ENCODE measurements at regions of chr7 and their contacts with region 1.

Region 1: GRCh38 chr7:1193593-1194424 is 33.8 kb upstream of the ZFAND2A start:
- DNase-seq: peak in 2 of 3 donors; percentile 58 to 61
- H3K4me3 ChIP-seq: no peak overlapping the region
- H3K27ac ChIP-seq: no peak overlapping the region
- H3K4me1 ChIP-seq: peaks cover 2 to 23% (median 12%) of the 10 kb centered on the region in 4 experiments
- H3K27me3 ChIP-seq: peaks cover 0 to 19% (median 2%) of the 10 kb centered on the region in 5 experiments

Region 2: DNA sequence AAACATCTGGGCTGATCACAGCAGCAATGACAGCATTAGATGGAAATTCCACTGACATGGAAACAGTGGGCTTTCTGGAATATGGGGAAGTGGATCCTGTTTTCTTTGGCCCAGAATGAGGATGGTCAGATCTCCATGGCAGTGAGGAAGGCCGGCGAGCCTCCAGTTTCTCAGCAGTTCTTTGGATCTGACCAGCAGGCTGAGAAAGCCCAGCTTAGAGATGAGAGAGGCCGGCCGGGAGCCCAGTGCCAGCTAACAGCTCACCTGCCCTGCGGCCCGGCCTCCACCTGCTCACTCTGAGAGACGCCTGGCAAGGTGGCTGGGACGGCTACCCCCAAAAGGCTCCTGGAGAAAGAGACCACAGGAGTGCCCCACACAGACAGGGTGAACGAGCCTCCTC is 81.7 kb before region 1 on chr7:
- CTCF ChIA-PET with region 1: no interaction called
- POLR2A ChIA-PET with region 1: no interaction called
- DNase-seq: no peak
- H3K4me3 ChIP-seq: no peak overlapping the region
- H3K27ac ChIP-seq: no peak overlapping the region
- H3K4me1 ChIP-seq: no peaks in the 10 kb centered on the region
- H3K27me3 ChIP-seq: no peaks in the 10 kb centered on the region

Region 3: DNA sequence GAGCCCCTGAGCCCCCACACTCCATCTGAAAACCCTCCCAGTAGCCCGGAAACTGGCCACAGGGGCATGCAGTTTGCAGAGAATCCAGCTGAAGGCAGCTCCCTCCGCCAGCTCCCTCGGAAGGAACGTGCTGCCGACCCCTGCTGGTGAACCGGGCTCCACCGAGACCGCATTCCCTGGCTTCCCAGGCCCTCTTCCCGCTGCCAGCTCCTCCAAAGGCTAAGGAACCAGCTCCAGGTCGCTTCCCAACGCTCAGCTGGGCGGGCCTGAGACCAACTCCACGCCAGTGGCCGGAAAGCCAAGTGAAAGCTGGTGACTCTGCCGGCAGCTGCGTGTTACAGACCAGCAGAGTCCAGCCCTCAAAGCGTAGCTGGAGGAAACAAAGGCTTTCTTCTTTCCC is 70.1 kb before region 1 on chr7:
- CTCF ChIA-PET with region 1: no interaction called
- POLR2A ChIA-PET with region 1: no interaction called
- DNase-seq: no peak
- H3K4me3 ChIP-seq: no peak overlapping the region
- H3K27ac ChIP-seq: no peak overlapping the region
- H3K4me1 ChIP-seq: peaks cover 0 to 4% (median 0%) of the 10 kb centered on the region in 4 experiments
- H3K27me3 ChIP-seq: no peaks in the 10 kb centered on the region

Region 4: GRCh38 chr7:1175967-1176851 is 17.6 kb before region 1 on chr7:
- CTCF ChIA-PET with region 1: interaction called, 30 read pairs
- POLR2A ChIA-PET with region 1: no interaction called
- DNase-seq: peak; percentile 38 to 64 (median 58)
- H3K4me3 ChIP-seq: peak overlapping the region in 3 of 7 experiments; percentile 44 to 65 (median 55)
- H3K27ac ChIP-seq: no peak overlapping the region
- H3K4me1 ChIP-seq: peaks cover 0 to 11% (median 8%) of the 10 kb centered on the region in 4 experiments
- H3K27me3 ChIP-seq: no peaks in the 10 kb centered on the region

Region 5: DNA sequence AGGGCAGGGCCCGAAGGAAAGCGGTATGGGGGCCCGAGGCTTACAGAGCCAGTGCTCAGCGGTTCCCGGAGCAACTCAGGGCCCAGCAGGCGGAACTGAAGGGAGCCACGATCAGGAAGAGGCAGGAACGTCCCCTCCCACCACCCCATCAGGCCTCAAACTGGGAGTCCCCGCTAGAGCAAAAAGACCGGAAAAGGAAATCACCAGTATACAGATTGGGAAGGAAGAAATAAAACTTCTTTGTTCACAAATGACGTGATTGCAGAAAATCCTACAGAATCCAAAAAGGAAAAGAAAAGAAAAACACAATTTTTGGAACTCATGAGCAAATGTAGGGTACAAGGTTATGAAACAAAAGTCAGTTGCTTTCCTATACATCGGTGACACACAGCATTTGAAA is 12.2 kb before region 1 on chr7:
- CTCF ChIA-PET with region 1: interaction called, 30 read pairs
- POLR2A ChIA-PET with region 1: no interaction called
- DNase-seq: no peak
- H3K4me3 ChIP-seq: peak overlapping the region in 1 of 7 experiments; percentile 28
- H3K27ac ChIP-seq: no peak overlapping the region
- H3K4me1 ChIP-seq: peaks cover 0 to 17% (median 4%) of the 10 kb centered on the region in 4 experiments
- H3K27me3 ChIP-seq: peaks cover 0 to 5% (median 0%) of the 10 kb centered on the region in 5 experiments

Region 6: GRCh38 chr7:1210321-1210978 is 16.6 kb after region 1 on chr7:
- CTCF ChIA-PET with region 1: interaction called, 11 read pairs
- POLR2A ChIA-PET with region 1: no interaction called
- DNase-seq: no peak
- H3K4me3 ChIP-seq: no peak overlapping the region
- H3K27ac ChIP-seq: no peak overlapping the region
- H3K4me1 ChIP-seq: no peaks in the 10 kb centered on the region
- H3K27me3 ChIP-seq: peaks cover 0 to 68% (median 25%) of the 10 kb centered on the region in 5 experiments

Region 7: DNA sequence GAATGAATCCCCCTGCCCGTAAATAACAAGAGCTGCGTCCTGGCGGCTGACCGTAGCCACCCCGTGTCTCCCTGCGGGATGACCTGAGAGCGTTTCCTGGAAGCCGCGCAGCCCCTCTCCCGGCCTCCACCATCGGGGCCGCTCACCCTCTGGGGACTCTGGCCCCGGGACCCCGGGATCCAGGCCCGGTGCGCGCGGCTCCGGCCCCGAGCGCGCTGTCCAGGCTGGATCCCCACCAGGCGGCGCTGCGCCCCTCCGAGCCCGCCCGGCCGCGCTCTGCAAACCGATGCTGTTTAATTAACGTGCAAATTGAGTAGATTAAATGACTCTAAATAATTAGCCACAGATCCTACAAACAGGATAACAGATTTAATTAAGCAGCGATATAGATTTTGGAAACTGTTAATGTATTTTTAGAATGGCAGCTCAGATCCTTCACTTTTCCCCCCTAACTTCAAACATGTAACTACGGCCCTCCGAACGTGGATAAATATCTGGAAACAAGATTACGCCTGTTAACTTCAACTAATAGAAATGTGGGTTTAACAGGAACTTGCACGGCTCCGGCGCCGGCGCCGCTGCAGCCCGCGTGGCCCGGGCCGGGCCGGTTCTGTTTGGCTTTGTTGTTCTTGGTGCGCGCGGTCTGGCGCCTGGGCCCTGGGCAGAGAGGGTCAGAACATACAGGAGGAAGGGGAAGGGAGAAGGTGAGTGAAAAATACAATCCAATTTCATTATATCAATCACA is 31.8 kb after region 1 on chr7:
- CTCF ChIA-PET with region 1: interaction called, 15 read pairs
- POLR2A ChIA-PET with region 1: interaction called, 3 read pairs
- DNase-seq: peak in 2 of 3 donors; percentile 55 to 60
- H3K4me3 ChIP-seq: no peak overlapping the region
- H3K27ac ChIP-seq: no peak overlapping the region
- H3K4me1 ChIP-seq: peaks cover 0 to 9% (median 5%) of the 10 kb centered on the region in 4 experiments
- H3K27me3 ChIP-seq: peaks cover 3 to 94% (median 61%) of the 10 kb centered on the region in 5 experiments

Region 8: GRCh38 chr7:1290026-1290678 is 96.3 kb after region 1 on chr7:
- CTCF ChIA-PET with region 1: no interaction called
- POLR2A ChIA-PET with region 1: no interaction called
- DNase-seq: peak; percentile 52 to 81 (median 73)
- H3K4me3 ChIP-seq: peak overlapping the region in 5 of 7 experiments; percentile 9 to 74 (median 59)
- H3K27ac ChIP-seq: no peak overlapping the region
- H3K4me1 ChIP-seq: peaks cover 0 to 15% (median 7%) of the 10 kb centered on the region in 4 experiments
- H3K27me3 ChIP-seq: peaks cover 0 to 77% (median 19%) of the 10 kb centered on the region in 5 experiments

Region 9: GRCh38 chr7:1342090-1342640 is 148.4 kb after region 1 on chr7:
- CTCF ChIA-PET with region 1: no interaction called
- POLR2A ChIA-PET with region 1: no interaction called
- DNase-seq: no peak
- H3K4me3 ChIP-seq: no peak overlapping the region
- H3K27ac ChIP-seq: no peak overlapping the region
- H3K4me1 ChIP-seq: no peaks in the 10 kb centered on the region
- H3K27me3 ChIP-seq: peaks cover 0 to 11% (median 3%) of the 10 kb centered on the region in 5 experiments

Region 10: DNA sequence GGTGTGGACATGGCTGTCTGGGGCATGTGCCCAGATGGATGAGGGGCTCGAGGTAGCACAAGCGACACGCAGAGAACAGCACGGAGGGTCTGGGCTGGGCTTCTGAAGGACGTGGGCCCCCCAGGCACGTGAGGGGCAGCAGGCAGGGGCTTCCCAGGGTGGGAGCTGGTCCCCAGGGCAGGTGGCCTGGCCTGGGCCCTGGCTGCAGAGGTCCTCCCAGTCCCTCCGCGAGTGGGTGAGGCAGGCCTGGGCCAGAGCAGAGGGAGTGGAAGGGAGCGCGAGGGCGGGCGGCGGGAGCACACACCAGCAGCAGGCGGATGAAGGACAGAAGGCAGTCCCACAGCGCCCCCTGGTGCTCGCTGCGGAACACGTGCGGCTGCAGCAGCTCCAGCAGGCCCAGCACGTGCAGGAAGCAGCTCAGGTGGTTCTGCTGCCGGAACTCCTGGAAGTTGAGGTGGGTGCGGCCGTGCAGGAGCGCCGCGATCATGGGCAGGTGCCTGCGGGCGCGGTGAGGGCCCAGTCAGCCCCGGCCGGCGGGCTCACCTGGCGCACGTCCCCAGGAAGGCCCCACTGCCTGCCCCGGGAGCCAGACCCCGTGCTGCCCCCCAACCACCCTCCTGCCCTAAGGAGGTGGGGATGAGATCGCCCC is 280.2 kb after region 1 on chr7:
- CTCF ChIA-PET with region 1: interaction called, 11 read pairs
- POLR2A ChIA-PET with region 1: no interaction called
- DNase-seq: peak; percentile 80 to 89 (median 87)
- H3K4me3 ChIP-seq: no peak overlapping the region
- H3K27ac ChIP-seq: no peak overlapping the region
- H3K4me1 ChIP-seq: peaks cover 0 to 6% (median 5%) of the 10 kb centered on the region in 4 experiments
- H3K27me3 ChIP-seq: no peaks in the 10 kb centered on the region